Activated T-helper 1 cell treated with anti-CD3 and anti-CD28 coated beads, Interleukin-12 subunit alpha, Interleukin-12 subunit beta, Interleukin-2, Interleukin-4 antibody, amounts not matched to agents 30 ng/mL and 10 ng/mL and 1 ng/mL, durations not matched to agents 14 hours and 24 hours and 36 hours (primary cell): ENCODE measurements at regions of chr14 and their contacts with region 1.

Region 1: GRCh38 chr14:63867933-63868921 is 15.4 kb downstream of the SYNE2 start:
- DNase-seq: peak; percentile 11
- H3K4me3 Mint-ChIP-seq: peak overlapping the region; percentile 54
- H3K27ac Mint-ChIP-seq: peak overlapping the region; percentile 69
- H3K4me1 Mint-ChIP-seq: peaks cover 78% of the 10 kb centered on the region
- H3K27me3 Mint-ChIP-seq: no peaks in the 10 kb centered on the region

Region 2: DNA sequence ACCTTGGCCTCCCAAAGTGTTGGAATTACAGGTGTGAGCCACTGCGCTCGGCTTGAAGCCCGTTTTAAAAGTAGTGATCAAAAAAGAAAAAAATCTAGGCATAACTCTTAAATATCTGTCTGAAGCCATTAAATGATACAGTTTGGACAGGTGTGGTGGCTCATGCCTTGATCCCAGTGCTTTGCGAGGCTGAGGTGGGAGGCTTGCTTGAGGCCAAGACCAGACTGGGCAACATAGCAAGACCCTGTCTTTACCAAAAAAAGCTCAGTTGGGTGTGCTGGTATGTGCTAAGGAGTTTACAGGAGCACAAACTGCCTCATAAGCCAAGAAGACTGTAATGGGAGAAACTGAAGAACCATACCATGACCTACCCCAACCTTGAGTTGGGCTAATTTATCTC is 10.6 kb after region 1 on chr14:
- intact Hi-C with region 1: no loop called
- DNase-seq: no peak
- H3K4me3 Mint-ChIP-seq: no peak overlapping the region
- H3K27ac Mint-ChIP-seq: no peak overlapping the region
- H3K4me1 Mint-ChIP-seq: peaks cover 22% of the 10 kb centered on the region
- H3K27me3 Mint-ChIP-seq: no peaks in the 10 kb centered on the region

Region 3: DNA sequence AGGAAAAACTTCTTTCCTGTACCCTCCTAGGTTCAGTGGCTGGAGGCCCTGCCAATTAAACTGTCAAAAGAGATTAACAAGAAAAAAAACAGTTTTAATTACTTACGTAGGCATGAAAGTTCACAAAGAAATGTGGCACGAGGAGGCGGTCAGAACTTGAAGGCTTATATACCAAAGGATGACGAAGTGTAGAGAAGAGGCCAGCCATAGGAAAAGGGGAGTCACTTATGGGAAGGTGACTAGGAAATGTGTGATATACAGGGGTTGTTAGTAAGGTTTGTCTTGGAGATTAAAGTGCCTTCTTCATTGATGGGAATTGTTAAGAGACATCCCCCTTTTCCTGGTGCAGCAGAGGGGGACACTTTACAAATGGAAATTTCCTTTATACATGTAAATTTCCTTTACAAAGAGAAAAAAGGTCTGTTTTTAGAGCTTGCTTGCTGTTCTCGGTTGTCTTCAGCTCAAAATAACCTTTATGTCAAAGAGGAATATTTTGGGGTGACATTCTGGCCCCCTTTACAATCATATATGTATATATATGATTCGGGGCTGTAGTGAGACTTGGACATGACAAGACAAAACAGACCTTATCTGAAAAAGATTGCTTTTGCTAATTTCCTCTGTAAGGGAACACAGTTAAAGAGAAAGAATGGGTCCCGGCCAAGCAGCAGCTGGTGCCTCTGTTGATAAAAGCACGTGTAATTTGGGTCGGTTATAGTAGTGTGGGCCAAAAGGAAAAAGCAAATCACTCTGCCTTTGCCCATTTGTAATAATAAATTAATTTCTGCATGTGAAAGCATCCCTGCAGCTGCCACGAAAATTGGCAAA is 23.1 kb after region 1 on chr14:
- intact Hi-C with region 1: no loop called
- DNase-seq: no peak
- H3K4me3 Mint-ChIP-seq: no peak overlapping the region
- H3K27ac Mint-ChIP-seq: no peak overlapping the region
- H3K4me1 Mint-ChIP-seq: no peaks in the 10 kb centered on the region
- H3K27me3 Mint-ChIP-seq: no peaks in the 10 kb centered on the region

Region 4: GRCh38 chr14:63901434-63902085 is 33.3 kb after region 1 on chr14:
- intact Hi-C with region 1: loop called (anchors 5 kb)
- DNase-seq: no peak
- H3K4me3 Mint-ChIP-seq: no peak overlapping the region
- H3K27ac Mint-ChIP-seq: peak overlapping the region; percentile 85
- H3K4me1 Mint-ChIP-seq: peaks cover 46% of the 10 kb centered on the region
- H3K27me3 Mint-ChIP-seq: peaks cover 2% of the 10 kb centered on the region

Region 5: GRCh38 chr14:63922696-63923421 is 54.6 kb after region 1 on chr14:
- intact Hi-C with region 1: no loop called
- DNase-seq: no peak
- H3K4me3 Mint-ChIP-seq: no peak overlapping the region
- H3K27ac Mint-ChIP-seq: no peak overlapping the region
- H3K4me1 Mint-ChIP-seq: peaks cover 16% of the 10 kb centered on the region
- H3K27me3 Mint-ChIP-seq: no peaks in the 10 kb centered on the region

Region 6: GRCh38 chr14:63938198-63939005 is 70.2 kb after region 1 on chr14:
- intact Hi-C with region 1: no loop called
- DNase-seq: peak; percentile 27
- H3K4me3 Mint-ChIP-seq: no peak overlapping the region
- H3K27ac Mint-ChIP-seq: no peak overlapping the region
- H3K4me1 Mint-ChIP-seq: peaks cover 36% of the 10 kb centered on the region
- H3K27me3 Mint-ChIP-seq: no peaks in the 10 kb centered on the region